Activated B cell treated with CpG ODN at 0.5 μM for 24 hours (primary cell): ENCODE measurements at regions of chr2 and their contacts with region 1.

Region 1: GRCh38 chr2:46650556-46651001 is 171.2 kb downstream of the TMEM247 start:
- DNase-seq: no peak
- ATAC-seq: peak; percentile 79
- H3K4me3 Mint-ChIP-seq: no peak overlapping the region
- H3K27ac Mint-ChIP-seq: no peak overlapping the region
- H3K4me1 Mint-ChIP-seq: no peaks in the 10 kb centered on the region
- H3K27me3 Mint-ChIP-seq: no peaks in the 10 kb centered on the region
- CTCF ChIP-seq: peak; percentile 83

Region 2: GRCh38 chr2:45993476-45993991 is 657.0 kb before region 1 on chr2:
- CTCF ChIA-PET with region 1: interaction called, 3 read pairs
- POLR2A ChIA-PET with region 1: no interaction called
- intact Hi-C with region 1: loop called (anchors 5 kb)
- DNase-seq: no peak
- ATAC-seq: peak; percentile 47
- H3K4me3 Mint-ChIP-seq: no peak overlapping the region
- H3K27ac Mint-ChIP-seq: no peak overlapping the region
- H3K4me1 Mint-ChIP-seq: no peaks in the 10 kb centered on the region
- H3K27me3 Mint-ChIP-seq: no peaks in the 10 kb centered on the region
- CTCF ChIP-seq: peak; percentile 61

Region 3: GRCh38 chr2:46010925-46011490 is 639.6 kb before region 1 on chr2:
- CTCF ChIA-PET with region 1: interaction called, 3 read pairs
- POLR2A ChIA-PET with region 1: no interaction called
- intact Hi-C with region 1: loop called (anchors 5 kb)
- DNase-seq: no peak
- ATAC-seq: no peak
- H3K4me3 Mint-ChIP-seq: no peak overlapping the region
- H3K27ac Mint-ChIP-seq: no peak overlapping the region
- H3K4me1 Mint-ChIP-seq: no peaks in the 10 kb centered on the region
- H3K27me3 Mint-ChIP-seq: no peaks in the 10 kb centered on the region
- CTCF ChIP-seq: no peak

Region 4: GRCh38 chr2:46062637-46063412 is 587.8 kb before region 1 on chr2:
- CTCF ChIA-PET with region 1: interaction called, 31 read pairs
- POLR2A ChIA-PET with region 1: no interaction called
- intact Hi-C with region 1: loop called (anchors 1 kb)
- DNase-seq: peak; percentile 30
- ATAC-seq: peak; percentile 70
- H3K4me3 Mint-ChIP-seq: no peak overlapping the region
- H3K27ac Mint-ChIP-seq: no peak overlapping the region
- H3K4me1 Mint-ChIP-seq: no peaks in the 10 kb centered on the region
- H3K27me3 Mint-ChIP-seq: no peaks in the 10 kb centered on the region
- CTCF ChIP-seq: peak; percentile 59

Region 5: GRCh38 chr2:46547223-46548102 is 103.1 kb before region 1 on chr2:
- CTCF ChIA-PET with region 1: no interaction called
- POLR2A ChIA-PET with region 1: no interaction called
- intact Hi-C with region 1: no loop called
- DNase-seq: no peak
- ATAC-seq: no peak
- H3K4me3 Mint-ChIP-seq: peak overlapping the region; percentile 78
- H3K27ac Mint-ChIP-seq: peak overlapping the region; percentile 91
- H3K4me1 Mint-ChIP-seq: peaks cover 88% of the 10 kb centered on the region
- H3K27me3 Mint-ChIP-seq: no peaks in the 10 kb centered on the region
- CTCF ChIP-seq: no peak